ENCODE measurements at regions of chr6 and their contacts with region 1.

Region 1: DNA sequence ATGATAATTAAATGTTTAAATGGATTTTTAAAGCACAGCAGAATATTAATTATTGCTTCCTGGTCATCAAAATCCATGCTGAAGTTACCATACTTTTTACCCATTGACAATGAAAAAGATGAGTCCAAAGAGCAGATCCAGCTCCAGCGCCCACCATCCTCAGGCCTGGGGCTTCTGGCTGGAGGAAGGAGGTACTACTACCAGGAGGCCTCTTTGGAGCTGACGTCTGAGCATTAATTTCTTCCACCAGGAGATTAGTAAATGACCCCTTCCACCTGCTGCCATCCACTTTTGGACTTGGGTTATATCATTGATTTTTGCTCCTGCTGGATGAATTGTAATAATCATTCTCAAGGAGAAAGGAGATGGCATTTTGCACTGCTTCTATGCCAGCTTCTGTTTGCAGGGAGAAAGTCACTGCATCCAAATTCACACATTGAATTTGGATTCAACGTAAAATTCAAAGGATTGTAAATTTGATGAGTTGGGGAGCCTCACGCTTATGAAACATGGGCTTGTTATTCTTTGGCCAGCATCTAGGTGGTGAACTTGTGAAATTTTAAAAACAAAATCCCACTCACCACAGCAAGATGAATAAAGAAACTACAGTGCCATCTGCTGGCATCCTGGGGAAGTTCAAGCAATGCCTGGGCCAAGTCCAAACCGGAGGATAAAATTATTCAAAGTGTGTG is 121.8 kb downstream of the SASH1 start:
- DNase-seq: peak; percentile 42
- H3K4me3 ChIP-seq: no peak overlapping the region
- H3K27ac ChIP-seq: no peak overlapping the region
- H3K4me1 ChIP-seq: no peaks in the 10 kb centered on the region
- H3K27me3 ChIP-seq: no peaks in the 10 kb centered on the region
- CTCF ChIP-seq: peak; percentile 85 to 97

Region 2: DNA sequence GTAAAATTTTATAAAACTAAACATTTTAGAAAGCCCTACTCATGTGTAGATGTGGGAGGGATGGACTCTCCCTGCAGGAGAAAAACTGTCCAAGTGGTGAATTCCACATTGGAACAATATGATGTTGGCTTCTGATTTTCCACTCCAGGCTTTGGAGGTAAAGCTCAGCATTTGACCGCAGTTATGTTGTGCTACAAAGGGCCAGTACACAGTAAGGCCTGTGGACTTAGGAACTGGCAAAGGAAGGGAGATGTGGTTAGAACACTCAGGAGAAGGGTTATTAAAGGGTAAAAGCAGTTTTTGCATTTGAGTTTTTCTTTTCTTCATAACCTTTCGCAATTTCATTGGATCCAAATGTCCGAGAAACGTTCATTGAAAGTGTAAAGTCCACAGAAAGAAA is 272.2 kb before region 1 on chr6:
- CTCF ChIA-PET with region 1: no interaction called
- dilution Hi-C with region 1: no loop called
- in situ Hi-C with region 1: loop called (anchors 10 kb)
- intact Hi-C with region 1: loop called (anchors 5 kb)
- DNase-seq: peak; percentile 86
- H3K4me3 ChIP-seq: peak overlapping the region in 1 of 3 experiments; percentile 6
- H3K27ac ChIP-seq: peak overlapping the region; percentile 89
- H3K4me1 ChIP-seq: peaks cover 40% of the 10 kb centered on the region
- H3K27me3 ChIP-seq: no peaks in the 10 kb centered on the region
- CTCF ChIP-seq: no peak

Region 3: DNA sequence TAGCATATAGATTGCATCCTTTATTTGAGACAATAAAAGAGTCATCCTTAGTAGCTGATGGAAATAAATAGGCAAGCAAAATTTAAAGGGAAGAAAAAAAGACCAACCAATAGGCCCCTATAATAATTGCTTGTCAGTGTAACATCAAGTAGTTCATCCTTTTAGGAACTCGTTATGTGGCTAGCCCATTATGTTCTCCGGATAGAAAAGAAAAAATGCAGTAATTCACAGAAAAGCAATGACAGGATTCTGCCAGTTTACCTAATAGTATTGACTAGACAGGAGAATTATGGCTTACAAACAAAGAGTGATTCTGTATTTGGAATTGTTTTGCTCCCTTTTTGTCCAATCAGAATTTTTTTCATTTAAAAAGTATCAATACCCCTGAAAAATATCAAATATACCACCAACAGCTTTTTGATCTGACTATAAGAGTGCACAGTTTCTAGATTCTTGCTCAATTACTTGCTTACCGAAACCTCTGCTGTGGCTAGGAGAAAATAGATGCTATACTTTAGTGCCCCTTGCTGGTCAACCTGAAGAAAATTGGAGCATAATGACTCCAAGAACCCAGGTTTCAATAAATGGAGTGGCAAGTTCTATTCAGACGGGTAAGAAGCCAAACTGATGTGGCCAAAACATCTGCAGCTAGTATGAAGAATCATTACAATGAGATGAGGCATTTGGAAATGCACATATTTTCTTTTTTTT is 213.3 kb before region 1 on chr6:
- CTCF ChIA-PET with region 1: no interaction called
- dilution Hi-C with region 1: no loop called
- in situ Hi-C with region 1: loop called in 1 of 2 experiments (anchors 25 kb)
- intact Hi-C with region 1: loop called (anchors 1 kb)
- DNase-seq: peak; percentile 52
- H3K4me3 ChIP-seq: no peak overlapping the region
- H3K27ac ChIP-seq: no peak overlapping the region
- H3K4me1 ChIP-seq: no peaks in the 10 kb centered on the region
- H3K27me3 ChIP-seq: no peaks in the 10 kb centered on the region
- CTCF ChIP-seq: peak; percentile 47 to 74

Region 4: GRCh38 chr6:148286563-148287170 is 177.8 kb before region 1 on chr6:
- CTCF ChIA-PET with region 1: no interaction called
- dilution Hi-C with region 1: no loop called
- in situ Hi-C with region 1: no loop called
- intact Hi-C with region 1: no loop called
- DNase-seq: no peak
- H3K4me3 ChIP-seq: no peak overlapping the region
- H3K27ac ChIP-seq: no peak overlapping the region
- H3K4me1 ChIP-seq: no peaks in the 10 kb centered on the region
- H3K27me3 ChIP-seq: no peaks in the 10 kb centered on the region
- CTCF ChIP-seq: no peak

Region 5: GRCh38 chr6:148358188-148358785 is 106.2 kb before region 1 on chr6:
- CTCF ChIA-PET with region 1: no interaction called
- dilution Hi-C with region 1: no loop called
- in situ Hi-C with region 1: no loop called
- intact Hi-C with region 1: no loop called
- DNase-seq: no peak
- H3K4me3 ChIP-seq: no peak overlapping the region
- H3K27ac ChIP-seq: no peak overlapping the region
- H3K4me1 ChIP-seq: no peaks in the 10 kb centered on the region
- H3K27me3 ChIP-seq: no peaks in the 10 kb centered on the region
- CTCF ChIP-seq: no peak

Region 6: GRCh38 chr6:148509800-148510581 is 45.5 kb after region 1 on chr6:
- CTCF ChIA-PET with region 1: interaction called, 3 read pairs
- dilution Hi-C with region 1: no loop called
- in situ Hi-C with region 1: no loop called
- intact Hi-C with region 1: loop called (anchors 1 kb)
- DNase-seq: peak; percentile 79
- H3K4me3 ChIP-seq: no peak overlapping the region
- H3K27ac ChIP-seq: peak overlapping the region; percentile 60
- H3K4me1 ChIP-seq: peaks cover 22% of the 10 kb centered on the region
- H3K27me3 ChIP-seq: no peaks in the 10 kb centered on the region
- CTCF ChIP-seq: no peak

Measured in mammary epithelial cell (primary cell).